ENCODE measurements at regions of chr6 and their contacts with region 1.

Region 1: GRCh38 chr6:111721753-111722154 is 116.1 kb upstream of the TRAF3IP2 start:
- DNase-seq: no peak
- H3K4me3 ChIP-seq: no peak overlapping the region
- CTCF ChIP-seq: peak; percentile 55

Region 2: DNA sequence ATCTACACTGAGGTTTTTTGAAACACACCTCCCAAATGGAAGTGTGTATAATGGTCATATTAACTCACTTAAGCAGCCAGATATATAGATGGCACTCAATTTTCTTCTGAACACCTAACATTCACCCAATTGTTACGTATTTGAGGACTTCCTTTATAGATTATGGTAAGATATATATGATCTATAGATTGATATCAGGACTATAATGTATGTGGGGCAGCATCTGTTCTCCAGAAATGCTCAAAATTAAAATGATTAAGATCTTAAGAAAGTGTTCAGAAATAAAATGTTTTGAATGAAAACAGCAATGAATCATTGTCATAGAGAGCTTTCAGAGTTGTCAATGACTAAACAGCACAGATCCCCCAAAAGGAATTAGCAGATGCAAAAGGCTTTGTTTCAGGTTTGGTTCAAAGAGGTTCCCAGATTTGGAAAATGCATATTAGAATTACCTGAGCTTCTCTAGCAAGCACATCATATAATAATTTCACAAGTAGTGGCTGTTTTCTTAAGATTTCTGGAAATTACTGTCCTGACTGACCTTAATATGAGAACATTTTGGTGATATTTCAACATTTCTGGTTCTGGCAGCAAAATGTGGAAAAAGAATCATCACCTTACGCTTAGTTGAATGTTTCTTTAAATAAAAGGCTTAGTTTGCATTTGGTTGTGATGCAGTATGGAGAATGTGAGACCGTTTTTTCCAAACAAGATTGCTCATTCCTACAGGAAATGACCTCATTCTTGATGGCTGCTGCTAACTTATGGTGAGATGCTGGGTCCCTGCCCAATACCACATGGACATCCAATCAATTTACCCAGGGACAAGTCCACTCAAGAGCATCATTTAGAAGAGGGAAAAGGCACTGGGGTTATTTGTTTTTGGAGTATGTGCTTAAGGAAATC is 147.6 kb before region 1 on chr6:
- CTCF ChIA-PET with region 1: no interaction called
- POLR2A ChIA-PET with region 1: no interaction called
- DNase-seq: peak; percentile 78
- H3K4me3 ChIP-seq: no peak overlapping the region
- CTCF ChIP-seq: no peak

Region 3: GRCh38 chr6:111737065-111737521 is 15.3 kb after region 1 on chr6:
- CTCF ChIA-PET with region 1: interaction called, 18 read pairs
- POLR2A ChIA-PET with region 1: no interaction called
- DNase-seq: no peak
- H3K4me3 ChIP-seq: no peak overlapping the region
- CTCF ChIP-seq: no peak

Region 4: DNA sequence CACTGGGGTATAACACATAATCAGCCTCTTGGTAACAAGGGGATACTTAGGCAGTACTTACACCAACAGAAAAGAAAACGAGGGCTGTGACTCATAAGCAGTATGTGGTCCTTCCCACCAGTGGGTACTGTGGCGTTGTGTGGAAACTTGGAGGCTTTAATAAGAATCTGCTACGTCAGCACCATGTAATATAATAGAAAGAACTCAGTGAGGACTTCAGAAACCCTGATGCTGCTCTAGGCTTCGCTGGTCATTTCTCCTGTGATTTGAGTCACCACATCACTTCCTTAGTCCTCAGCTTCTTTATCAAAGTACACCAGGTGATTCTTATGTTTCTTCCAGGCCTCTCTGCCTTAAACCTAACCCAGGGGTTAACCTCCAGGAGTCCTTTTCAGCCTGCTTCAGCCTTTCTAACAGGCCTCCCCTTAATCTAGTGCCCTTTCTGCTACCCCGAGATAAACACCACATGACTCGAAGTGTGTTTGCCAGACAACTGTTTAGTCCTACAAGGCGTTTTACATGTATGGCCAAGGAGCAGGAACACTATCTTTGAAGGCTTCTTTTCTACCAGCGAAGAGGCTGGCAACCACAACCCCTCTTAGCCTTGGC is 83.0 kb after region 1 on chr6:
- CTCF ChIA-PET with region 1: no interaction called
- POLR2A ChIA-PET with region 1: no interaction called
- DNase-seq: no peak
- H3K4me3 ChIP-seq: no peak overlapping the region
- CTCF ChIP-seq: peak; percentile 7

Measured in AG04449 (cell line).